ENCODE measurements at regions of chr1 and their contacts with region 1.

Region 1: GRCh38 chr1:172719694-172720138 is 60.8 kb downstream of the FASLG start:
- DNase-seq: no peak
- H3K4me3 Mint-ChIP-seq: no peak overlapping the region
- H3K27ac Mint-ChIP-seq: no peak overlapping the region
- H3K4me1 Mint-ChIP-seq: peaks cover 27% of the 10 kb centered on the region
- H3K27me3 Mint-ChIP-seq: peaks cover 11% of the 10 kb centered on the region

Region 2: GRCh38 chr1:172449585-172450534 is 269.9 kb before region 1 on chr1:
- CTCF ChIA-PET with region 1: interaction called, 39 read pairs
- DNase-seq: peak; percentile 52
- H3K4me3 Mint-ChIP-seq: peak overlapping the region; percentile 5
- H3K27ac Mint-ChIP-seq: peak overlapping the region; percentile 88
- H3K4me1 Mint-ChIP-seq: peaks cover 26% of the 10 kb centered on the region
- H3K27me3 Mint-ChIP-seq: no peaks in the 10 kb centered on the region

Region 3: GRCh38 chr1:172609528-172609927 is 110.2 kb before region 1 on chr1:
- CTCF ChIA-PET with region 1: interaction called, 274 read pairs
- DNase-seq: no peak
- H3K4me3 Mint-ChIP-seq: no peak overlapping the region
- H3K27ac Mint-ChIP-seq: no peak overlapping the region
- H3K4me1 Mint-ChIP-seq: peaks cover 2% of the 10 kb centered on the region
- H3K27me3 Mint-ChIP-seq: no peaks in the 10 kb centered on the region

Region 4: DNA sequence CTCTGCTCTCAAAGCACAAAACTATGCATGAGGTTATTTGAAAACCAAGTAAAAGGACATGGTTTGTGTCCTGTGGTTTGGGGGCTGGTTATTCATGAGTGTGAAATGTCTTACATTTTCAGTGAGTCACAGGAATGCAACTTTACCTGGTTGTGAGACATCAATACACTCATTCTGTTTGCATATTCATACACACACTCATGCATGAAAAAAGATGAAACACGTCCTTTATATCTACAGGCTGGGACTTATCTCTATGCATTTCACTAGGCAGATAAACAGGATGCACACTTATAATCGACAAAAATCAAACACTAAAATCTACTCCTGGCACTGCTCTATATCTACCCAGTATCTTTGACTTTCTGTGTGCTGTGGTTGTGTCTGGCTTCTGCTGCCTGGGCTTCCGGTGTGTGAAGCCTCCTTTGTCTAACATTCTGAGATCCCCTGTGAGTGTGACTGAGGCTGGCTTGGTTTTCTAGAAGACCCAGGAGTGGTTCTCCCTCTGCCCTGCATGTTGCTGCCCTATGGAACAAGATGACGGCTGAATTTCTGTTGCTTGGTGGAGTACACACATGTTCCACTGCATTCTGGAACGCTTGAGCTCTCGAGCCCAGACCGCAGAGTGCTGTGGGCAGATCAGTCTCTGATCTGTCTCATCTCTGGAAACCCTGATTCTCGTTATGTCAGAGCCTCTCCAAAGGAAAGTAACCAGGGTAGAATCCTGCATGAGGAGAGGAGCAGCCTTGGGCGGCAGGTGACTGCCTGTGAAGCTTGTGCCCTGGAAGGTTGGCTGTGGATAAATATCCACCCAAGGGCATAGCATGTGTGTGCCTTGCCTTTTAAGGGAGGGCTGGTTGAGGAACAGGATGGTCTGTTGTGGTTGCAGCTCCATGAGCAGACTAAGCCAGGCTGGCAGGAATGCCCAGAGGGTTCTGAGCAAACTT is 80.6 kb before region 1 on chr1:
- CTCF ChIA-PET with region 1: interaction called, 14 read pairs
- DNase-seq: peak; percentile 84
- H3K4me3 Mint-ChIP-seq: peak overlapping the region; percentile 38
- H3K27ac Mint-ChIP-seq: peak overlapping the region; percentile 85
- H3K4me1 Mint-ChIP-seq: peaks cover 70% of the 10 kb centered on the region
- H3K27me3 Mint-ChIP-seq: peaks cover 47% of the 10 kb centered on the region

Region 5: GRCh38 chr1:172708452-172708851 is 11.3 kb before region 1 on chr1:
- CTCF ChIA-PET with region 1: interaction called, 14 read pairs
- DNase-seq: peak; percentile 49
- H3K4me3 Mint-ChIP-seq: no peak overlapping the region
- H3K27ac Mint-ChIP-seq: peak overlapping the region; percentile 12
- H3K4me1 Mint-ChIP-seq: peaks cover 33% of the 10 kb centered on the region
- H3K27me3 Mint-ChIP-seq: peaks cover 10% of the 10 kb centered on the region

Region 6: GRCh38 chr1:172761581-172762025 is 41.9 kb after region 1 on chr1:
- CTCF ChIA-PET with region 1: no interaction called
- DNase-seq: no peak
- H3K4me3 Mint-ChIP-seq: no peak overlapping the region
- H3K27ac Mint-ChIP-seq: no peak overlapping the region
- H3K4me1 Mint-ChIP-seq: peaks cover 2% of the 10 kb centered on the region
- H3K27me3 Mint-ChIP-seq: no peaks in the 10 kb centered on the region